ENCODE measurements at regions of chr1 and their contacts with region 1.

Region 1: DNA sequence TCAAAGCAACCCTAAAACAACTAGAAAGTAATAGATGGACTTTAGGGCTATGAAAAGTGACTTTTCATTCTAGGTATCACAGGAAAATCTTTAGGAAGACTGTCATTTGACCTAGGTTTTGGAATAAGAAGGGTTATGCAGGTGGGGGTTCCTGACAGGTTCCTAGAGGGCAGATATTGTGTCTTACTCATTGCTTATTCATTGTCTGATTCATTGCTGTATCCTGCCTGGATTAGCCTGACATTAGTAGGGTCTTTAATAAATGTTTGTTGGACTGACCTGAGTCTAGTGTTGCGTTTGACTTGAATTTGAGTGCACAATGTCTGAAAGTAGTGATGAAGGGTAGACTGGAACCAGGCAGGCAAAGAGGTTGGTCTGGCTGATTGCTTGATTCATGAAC is 6.0 kb downstream of the FNBP1L start:
- DNase-seq: no peak
- ATAC-seq: no peak
- H3K4me3 ChIP-seq: no peak overlapping the region
- H3K27ac ChIP-seq: no peak overlapping the region
- H3K4me1 ChIP-seq: no peaks in the 10 kb centered on the region
- H3K27me3 ChIP-seq: no peaks in the 10 kb centered on the region

Region 2: GRCh38 chr1:93537924-93538323 is 84.0 kb after region 1 on chr1:
- intact Hi-C with region 1: loop called in 1 of 4 experiments (anchors 5 kb)
- DNase-seq: no peak
- ATAC-seq: no peak
- H3K4me3 ChIP-seq: no peak overlapping the region
- H3K27ac ChIP-seq: no peak overlapping the region
- H3K4me1 ChIP-seq: no peaks in the 10 kb centered on the region
- H3K27me3 ChIP-seq: no peaks in the 10 kb centered on the region

Measured in right cardiac atrium (tissue), 5 donors.